B cell (primary cell): ENCODE measurements at regions of chr19 and their contacts with region 1.

Region 1: GRCh38 chr19:41263850-41264580 is at the start of gene HNRNPUL1:
- DNase-seq: peak; percentile 100
- ATAC-seq: peak; percentile 72
- H3K4me3 ChIP-seq: peak within 1 kb of the TSS; percentile 85 to 95 (median 93)
- H3K4me3 Mint-ChIP-seq: peak within 1 kb of the TSS; percentile 98
- H3K27ac ChIP-seq: peak within 1 kb of the TSS; percentile 97 to 99
- H3K27ac Mint-ChIP-seq: peak within 1 kb of the TSS; percentile 100
- H3K4me1 ChIP-seq: peaks cover 24 to 38% of the 10 kb centered on the region in 2 donors
- H3K4me1 Mint-ChIP-seq: peaks cover 36% of the 10 kb centered on the region
- H3K27me3 ChIP-seq: no peaks in the 10 kb centered on the region
- H3K27me3 Mint-ChIP-seq: no peaks in the 10 kb centered on the region
- CTCF ChIP-seq: peak; percentile 29
- total RNA-seq, gene HNRNPUL1: 273 and 274 TPM in 2 replicates

Region 2: GRCh38 chr19:40285353-40286234 is 978.4 kb before region 1 on chr19:
- CTCF ChIA-PET with region 1: no interaction called
- POLR2A ChIA-PET with region 1: interaction called, 3 read pairs
- intact Hi-C with region 1: loop called (anchors 10 kb)
- DNase-seq: peak; percentile 100
- ATAC-seq: peak; percentile 74
- H3K4me3 ChIP-seq: peak overlapping the region in 4 of 5 experiments; percentile 68 to 89 (median 78)
- H3K4me3 Mint-ChIP-seq: peak overlapping the region; percentile 87
- H3K27ac ChIP-seq: peak overlapping the region; percentile 99 to 100
- H3K27ac Mint-ChIP-seq: peak overlapping the region; percentile 97
- H3K4me1 ChIP-seq: peaks cover 40 to 54% of the 10 kb centered on the region in 2 donors
- H3K4me1 Mint-ChIP-seq: peaks cover 53% of the 10 kb centered on the region
- H3K27me3 ChIP-seq: no peaks in the 10 kb centered on the region
- H3K27me3 Mint-ChIP-seq: no peaks in the 10 kb centered on the region
- CTCF ChIP-seq: no peak

Region 3: DNA sequence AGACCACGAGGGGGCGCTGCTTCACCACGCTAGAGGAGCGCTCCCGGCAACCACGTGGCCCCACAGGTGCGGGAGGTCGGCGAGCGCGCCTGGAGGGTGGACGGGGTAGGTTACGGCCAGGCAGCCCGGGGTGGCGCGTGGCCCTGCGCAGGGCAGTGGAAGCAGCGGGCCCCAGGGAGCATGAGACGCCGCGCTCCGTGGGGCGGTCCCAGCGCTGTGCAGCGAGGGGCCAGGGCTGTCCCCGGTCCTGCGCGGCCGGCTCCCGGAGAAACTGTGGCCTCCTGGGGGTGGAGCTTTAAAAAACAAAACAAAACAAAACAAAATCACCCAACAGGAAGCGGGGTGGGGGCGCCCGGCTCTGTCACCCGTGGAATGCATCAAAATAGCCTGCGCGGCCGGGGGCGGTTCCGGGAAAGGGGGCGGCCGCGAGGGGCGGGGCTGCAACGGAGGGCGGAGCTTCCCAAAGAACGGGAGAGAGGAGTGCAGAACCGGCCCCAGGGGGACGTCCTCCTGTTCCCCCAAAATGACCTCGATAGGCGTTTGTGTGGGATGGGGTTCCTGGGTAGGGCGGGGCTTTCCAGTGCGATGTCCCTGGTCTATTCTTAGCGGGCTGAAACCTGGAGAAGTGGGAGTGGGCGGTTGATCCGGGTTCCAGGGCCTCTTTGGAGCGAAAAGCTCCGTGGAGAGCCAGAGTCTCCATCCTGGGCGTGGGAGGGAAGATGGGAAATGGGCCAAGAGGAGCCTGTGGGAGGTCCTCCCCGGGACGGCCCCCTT is 600.9 kb before region 1 on chr19:
- CTCF ChIA-PET with region 1: no interaction called
- POLR2A ChIA-PET with region 1: interaction called, 4 read pairs
- intact Hi-C with region 1: loop called (anchors 1 kb)
- DNase-seq: peak; percentile 95
- ATAC-seq: peak; percentile 89
- H3K4me3 ChIP-seq: peak overlapping the region; percentile 11 to 78 (median 67)
- H3K4me3 Mint-ChIP-seq: peak overlapping the region; percentile 89
- H3K27ac ChIP-seq: peak overlapping the region; percentile 64 to 80
- H3K27ac Mint-ChIP-seq: peak overlapping the region; percentile 94
- H3K4me1 ChIP-seq: peaks cover 11 to 15% of the 10 kb centered on the region in 2 donors
- H3K4me1 Mint-ChIP-seq: peaks cover 19% of the 10 kb centered on the region
- H3K27me3 ChIP-seq: no peaks in the 10 kb centered on the region
- H3K27me3 Mint-ChIP-seq: no peaks in the 10 kb centered on the region
- CTCF ChIP-seq: peak; percentile 96

Region 4: GRCh38 chr19:41206926-41207750 is 56.9 kb before region 1 on chr19:
- CTCF ChIA-PET with region 1: interaction called, 48 read pairs
- POLR2A ChIA-PET with region 1: interaction called, 19 read pairs
- intact Hi-C with region 1: no loop called
- DNase-seq: no peak
- ATAC-seq: no peak
- H3K4me3 ChIP-seq: no peak overlapping the region
- H3K4me3 Mint-ChIP-seq: no peak overlapping the region
- H3K27ac ChIP-seq: no peak overlapping the region
- H3K27ac Mint-ChIP-seq: no peak overlapping the region
- H3K4me1 ChIP-seq: no peaks in the 10 kb centered on the region
- H3K4me1 Mint-ChIP-seq: no peaks in the 10 kb centered on the region
- H3K27me3 ChIP-seq: no peaks in the 10 kb centered on the region
- H3K27me3 Mint-ChIP-seq: no peaks in the 10 kb centered on the region
- CTCF ChIP-seq: no peak

Region 5: DNA sequence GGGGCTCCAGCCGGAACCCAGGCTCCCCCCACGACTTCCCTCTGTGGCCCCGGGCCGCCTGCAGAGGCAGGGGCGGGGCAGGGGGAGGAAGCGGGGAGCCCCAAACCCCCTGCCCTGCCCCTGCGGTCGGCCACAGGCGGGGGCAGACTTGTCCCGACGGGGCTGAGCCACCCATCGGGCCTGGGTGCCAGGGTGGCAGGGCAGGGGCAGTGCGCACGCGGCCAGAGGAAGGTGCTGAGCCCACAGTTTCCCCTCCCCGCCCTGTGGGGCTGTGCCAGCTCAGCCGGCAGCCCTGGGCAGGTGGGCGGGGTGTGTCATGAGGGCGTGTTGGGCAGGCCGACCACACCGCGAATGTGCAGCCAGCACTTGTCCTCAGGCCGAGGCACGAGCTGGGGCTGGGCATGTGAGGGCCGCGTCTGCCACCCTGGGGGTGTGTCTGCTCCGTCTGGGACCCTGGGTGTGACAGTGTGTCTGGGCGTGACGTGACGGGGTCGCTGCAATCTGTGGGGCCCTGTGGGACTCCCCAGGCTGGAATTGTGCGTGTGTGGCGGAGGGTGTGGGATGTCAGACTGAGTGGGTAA is 63.7 kb after region 1 on chr19:
- CTCF ChIA-PET with region 1: interaction called, 6 read pairs
- POLR2A ChIA-PET with region 1: interaction called, 11 read pairs
- intact Hi-C with region 1: loop called (anchors 1 kb)
- DNase-seq: peak; percentile 90
- ATAC-seq: peak; percentile 78
- H3K4me3 ChIP-seq: peak overlapping the region; percentile 8 to 72 (median 39)
- H3K4me3 Mint-ChIP-seq: peak overlapping the region; percentile 88
- H3K27ac ChIP-seq: peak overlapping the region; percentile 76 to 97
- H3K27ac Mint-ChIP-seq: peak overlapping the region; percentile 98
- H3K4me1 ChIP-seq: peaks cover 59 to 80% of the 10 kb centered on the region in 2 donors
- H3K4me1 Mint-ChIP-seq: peaks cover 72% of the 10 kb centered on the region
- H3K27me3 ChIP-seq: no peaks in the 10 kb centered on the region
- H3K27me3 Mint-ChIP-seq: no peaks in the 10 kb centered on the region
- CTCF ChIP-seq: no peak

Region 6: DNA sequence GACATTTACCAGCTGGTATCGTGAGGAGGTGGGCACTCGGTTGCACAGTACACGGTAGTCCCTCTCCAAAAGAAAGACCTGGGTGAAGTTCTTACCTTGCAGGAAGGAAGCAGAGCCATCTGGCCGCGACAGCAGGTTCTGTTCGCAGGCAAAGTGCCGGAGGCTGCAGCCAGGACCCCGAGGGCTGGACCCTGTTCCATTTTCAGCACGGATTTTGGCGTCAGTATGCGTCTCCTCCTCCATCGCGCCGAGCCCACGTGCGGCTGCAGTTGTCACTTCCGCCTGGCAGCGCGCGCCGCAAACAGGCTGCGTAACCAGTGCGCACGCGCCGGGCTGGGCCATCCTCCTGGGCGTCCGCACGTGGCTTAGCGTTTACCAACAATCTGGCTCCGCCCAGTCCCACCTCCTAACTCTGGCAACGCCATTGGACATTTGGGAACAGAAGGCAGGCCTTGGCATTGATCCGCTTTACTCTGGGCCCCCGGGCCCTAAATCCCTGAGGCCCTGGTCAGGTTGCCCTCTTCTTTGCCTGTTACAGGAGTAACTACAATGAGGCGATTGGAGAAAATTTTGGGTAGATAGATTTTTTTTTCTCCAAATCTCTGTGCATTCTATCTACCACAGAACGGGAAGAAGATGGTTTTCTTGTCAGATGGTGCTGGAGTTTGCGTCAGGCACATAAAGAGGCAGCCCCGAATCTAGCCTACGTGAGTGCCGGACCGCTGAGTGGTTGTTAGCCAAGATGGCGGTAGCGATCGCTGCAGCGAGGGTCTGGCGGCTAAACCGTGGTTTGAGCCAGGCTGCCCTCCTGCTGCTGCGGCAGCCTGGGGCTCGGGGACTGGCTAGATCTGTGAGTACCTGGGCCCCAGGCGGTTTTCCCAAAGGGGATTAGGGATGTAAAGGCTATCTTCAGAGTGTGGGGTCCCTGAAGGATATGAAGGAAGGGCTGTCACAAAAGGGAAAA is 133.4 kb after region 1 on chr19 and contains the starts of genes BCKDHA and EXOSC5:
- CTCF ChIA-PET with region 1: no interaction called
- POLR2A ChIA-PET with region 1: no interaction called
- intact Hi-C with region 1: loop called (anchors 1 kb)
- DNase-seq: peak; percentile 100
- ATAC-seq: peak; percentile 98
- H3K4me3 ChIP-seq: peak within 1 kb of the TSS; percentile 84 to 100 (median 90)
- H3K4me3 Mint-ChIP-seq: peak within 1 kb of the TSS; percentile 96
- H3K27ac ChIP-seq: peak within 1 kb of the TSS; percentile 94 to 96
- H3K27ac Mint-ChIP-seq: peak within 1 kb of the TSS; percentile 99
- H3K4me1 ChIP-seq: peaks cover 27 to 28% of the 10 kb centered on the region in 2 donors
- H3K4me1 Mint-ChIP-seq: peaks cover 45% of the 10 kb centered on the region
- H3K27me3 ChIP-seq: no peaks in the 10 kb centered on the region
- H3K27me3 Mint-ChIP-seq: no peaks in the 10 kb centered on the region
- CTCF ChIP-seq: no peak
- total RNA-seq, gene BCKDHA: 20.6 and 25.2 TPM in 2 replicates
- total RNA-seq, gene EXOSC5: 14.1 and 16.1 TPM in 2 replicates

Region 7: GRCh38 chr19:41501854-41502253 is 237.8 kb after region 1 on chr19:
- CTCF ChIA-PET with region 1: no interaction called
- POLR2A ChIA-PET with region 1: no interaction called
- intact Hi-C with region 1: no loop called
- DNase-seq: no peak
- ATAC-seq: no peak
- H3K4me3 ChIP-seq: no peak overlapping the region
- H3K4me3 Mint-ChIP-seq: no peak overlapping the region
- H3K27ac ChIP-seq: no peak overlapping the region
- H3K27ac Mint-ChIP-seq: no peak overlapping the region
- H3K4me1 ChIP-seq: no peaks in the 10 kb centered on the region
- H3K4me1 Mint-ChIP-seq: peaks cover 3% of the 10 kb centered on the region
- H3K27me3 ChIP-seq: peaks cover 0 to 21% (median 0%) of the 10 kb centered on the region in 4 experiments
- H3K27me3 Mint-ChIP-seq: peaks cover 50% of the 10 kb centered on the region
- CTCF ChIP-seq: no peak

Region 8: DNA sequence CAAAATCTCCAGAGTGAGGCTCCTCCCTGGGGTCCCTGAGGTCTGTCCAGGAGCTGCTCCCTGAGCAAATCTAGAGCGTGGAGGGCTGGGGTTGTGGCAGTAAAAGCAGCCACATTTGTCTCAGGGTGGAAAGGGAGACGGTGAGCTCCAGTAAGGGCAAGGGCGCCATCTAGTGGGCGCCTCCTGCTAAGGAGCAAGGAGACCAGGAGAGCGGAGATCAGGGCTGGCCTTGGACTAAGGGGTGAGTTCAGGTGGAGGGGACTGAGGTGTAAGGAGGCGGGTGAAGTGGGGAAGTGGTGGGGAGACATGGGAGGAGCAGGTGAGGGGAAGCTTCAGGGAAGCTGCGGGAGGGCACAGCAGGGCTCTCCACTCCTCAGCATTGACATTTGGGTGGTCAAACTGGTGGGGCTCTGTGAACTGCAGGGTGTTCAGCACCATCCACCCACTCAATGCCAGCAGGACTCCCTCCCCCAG is 306.7 kb after region 1 on chr19:
- CTCF ChIA-PET with region 1: interaction called, 8 read pairs
- POLR2A ChIA-PET with region 1: no interaction called
- intact Hi-C with region 1: loop called (anchors 10 kb)
- DNase-seq: peak; percentile 88
- ATAC-seq: peak; percentile 98
- H3K4me3 ChIP-seq: no peak overlapping the region
- H3K4me3 Mint-ChIP-seq: no peak overlapping the region
- H3K27ac ChIP-seq: no peak overlapping the region
- H3K27ac Mint-ChIP-seq: no peak overlapping the region
- H3K4me1 ChIP-seq: peaks cover 9 to 12% of the 10 kb centered on the region in 2 donors
- H3K4me1 Mint-ChIP-seq: peaks cover 11% of the 10 kb centered on the region
- H3K27me3 ChIP-seq: no peaks in the 10 kb centered on the region
- H3K27me3 Mint-ChIP-seq: peaks cover under 1% of the 10 kb centered on the region
- CTCF ChIP-seq: peak; percentile 91

Region 9: GRCh38 chr19:41801792-41802211 is 537.8 kb after region 1 on chr19:
- CTCF ChIA-PET with region 1: no interaction called
- POLR2A ChIA-PET with region 1: no interaction called
- intact Hi-C with region 1: no loop called
- DNase-seq: peak; percentile 68
- ATAC-seq: peak; percentile 53
- H3K4me3 ChIP-seq: peak overlapping the region in 2 of 5 experiments; percentile 1 to 15
- H3K4me3 Mint-ChIP-seq: peak overlapping the region; percentile 50
- H3K27ac ChIP-seq: peak overlapping the region; percentile 37 to 81
- H3K27ac Mint-ChIP-seq: peak overlapping the region; percentile 86
- H3K4me1 ChIP-seq: peaks cover 29 to 46% of the 10 kb centered on the region in 2 donors
- H3K4me1 Mint-ChIP-seq: peaks cover 41% of the 10 kb centered on the region
- H3K27me3 ChIP-seq: no peaks in the 10 kb centered on the region
- H3K27me3 Mint-ChIP-seq: no peaks in the 10 kb centered on the region
- CTCF ChIP-seq: no peak